HepG2 (cell line): ENCODE measurements at regions of chr2 and their contacts with region 1.

Region 1: GRCh38 chr2:120503793-120504571 is 158.0 kb downstream of the INHBB start:
- DNase-seq: peak; percentile 59
- ATAC-seq: peak; percentile 72
- H3K4me3 ChIP-seq: 0 out of 6 replicates have a peak overlapping the region, but pooled peaks of 1 of the 3 experiments have one; percentile 10
- H3K27ac ChIP-seq: no peak overlapping the region
- H3K4me1 ChIP-seq: peaks cover 46% of the 10 kb centered on the region
- H3K27me3 ChIP-seq: peaks cover 2 to 70% of the 10 kb centered on the region in 2 experiments; a peak in 4 of 5 replicates
- CTCF ChIP-seq: peak; percentile 42
- EP300 ChIP-seq: no peak
- POLR2A ChIP-seq: no peak
- RAD21 ChIP-seq: peak; percentile 70; the same call in 1 of the 2 replicates

Region 2: GRCh38 chr2:120210262-120210693 is 293.7 kb before region 1 on chr2:
- CTCF ChIA-PET with region 1: no interaction called
- POLR2A ChIA-PET with region 1: no interaction called
- in situ Hi-C with region 1: no loop called
- intact Hi-C with region 1: no loop called
- DNase-seq: no peak
- ATAC-seq: no peak
- H3K4me3 ChIP-seq: no peak overlapping the region; a peak in 1 of 6 replicates
- H3K27ac ChIP-seq: no peak overlapping the region
- H3K4me1 ChIP-seq: peaks cover 6% of the 10 kb centered on the region; the same call in 1 of the 2 replicates
- H3K27me3 ChIP-seq: peaks cover 2 to 13% of the 10 kb centered on the region in 2 experiments; a peak in 3 of 5 replicates
- CTCF ChIP-seq: no peak
- EP300 ChIP-seq: no peak
- POLR2A ChIP-seq: no peak
- RAD21 ChIP-seq: no peak

Region 3: DNA sequence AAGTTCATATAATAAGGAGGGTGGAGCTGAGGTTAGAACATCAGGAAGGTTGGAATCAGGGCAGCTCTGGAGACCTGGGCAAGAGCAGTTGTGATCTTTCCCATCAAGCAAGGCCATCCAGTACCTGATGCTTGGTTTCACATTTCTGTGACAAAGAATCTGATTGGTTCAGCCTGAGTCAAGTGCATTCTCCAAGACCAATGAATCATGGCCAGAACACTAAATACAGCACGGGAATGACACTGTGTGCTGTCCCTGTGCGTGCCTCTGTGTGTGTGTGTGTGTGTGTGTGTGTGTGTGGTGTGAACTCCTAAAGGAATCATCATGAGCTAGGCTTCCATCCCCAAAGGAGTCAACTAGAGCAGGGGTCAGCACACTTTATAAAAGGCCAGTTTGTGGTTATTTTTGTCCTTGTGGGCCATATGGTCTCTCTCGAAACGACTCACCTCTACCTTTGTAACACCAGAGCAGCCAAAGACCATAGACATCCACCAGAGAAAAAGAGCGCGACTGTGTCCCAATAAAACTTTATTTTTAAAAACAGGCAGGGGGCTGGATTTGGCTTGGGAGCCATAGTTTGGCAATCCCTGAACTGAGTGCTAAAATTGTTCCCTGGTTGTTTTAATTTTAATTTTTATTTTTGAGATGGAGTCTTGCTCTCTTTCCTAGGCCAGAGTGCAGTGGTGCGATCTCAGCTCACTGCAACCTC is 58.4 kb before region 1 on chr2:
- CTCF ChIA-PET with region 1: no interaction called
- POLR2A ChIA-PET with region 1: no interaction called
- in situ Hi-C with region 1: no loop called
- intact Hi-C with region 1: loop called (anchors 1 kb)
- DNase-seq: peak; percentile 77
- ATAC-seq: peak; percentile 20; the same call in 2 of the 3 replicates
- H3K4me3 ChIP-seq: no peak overlapping the region
- H3K27ac ChIP-seq: no peak overlapping the region
- H3K4me1 ChIP-seq: peaks cover 31% of the 10 kb centered on the region
- H3K27me3 ChIP-seq: peaks cover 20 to 86% of the 10 kb centered on the region in 2 experiments; a peak in 4 of 5 replicates
- CTCF ChIP-seq: no peak
- EP300 ChIP-seq: no peak
- POLR2A ChIP-seq: no peak
- RAD21 ChIP-seq: no peak